ENCODE measurements at regions of chr14 and their contacts with region 1.

Region 1: DNA sequence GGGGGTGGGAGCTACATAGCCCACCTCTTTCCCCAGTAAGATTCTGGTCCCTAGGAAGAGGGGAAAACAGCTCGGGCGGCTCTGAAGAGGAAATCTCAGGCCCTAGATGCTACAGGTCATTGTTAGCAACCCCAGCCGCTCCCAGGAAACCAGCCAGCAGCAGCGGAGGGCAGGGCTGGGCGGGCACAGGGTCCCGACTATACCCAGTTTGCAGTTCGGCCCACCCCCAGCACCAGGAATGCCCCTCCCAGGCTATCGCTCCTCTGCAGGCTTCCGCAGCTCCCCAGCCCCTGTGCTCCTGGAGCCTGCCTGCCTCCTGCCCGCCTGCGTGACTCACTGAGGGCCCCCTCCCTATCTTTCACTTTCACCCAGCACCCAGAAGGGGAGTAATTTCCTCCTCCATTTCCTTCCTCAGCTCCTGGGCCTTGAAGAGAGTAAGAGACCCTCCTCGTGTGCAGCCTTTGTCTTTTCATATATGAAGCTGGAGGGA is 27.2 kb upstream of the PNMA1 start:
- DNase-seq: peak; percentile 83
- ATAC-seq: peak; percentile 73
- H3K4me3 Mint-ChIP-seq: peak overlapping the region; percentile 74
- H3K27ac Mint-ChIP-seq: peak overlapping the region; percentile 98
- H3K4me1 Mint-ChIP-seq: peaks cover 71% of the 10 kb centered on the region
- H3K27me3 Mint-ChIP-seq: no peaks in the 10 kb centered on the region
- CTCF ChIP-seq: no peak

Region 2: DNA sequence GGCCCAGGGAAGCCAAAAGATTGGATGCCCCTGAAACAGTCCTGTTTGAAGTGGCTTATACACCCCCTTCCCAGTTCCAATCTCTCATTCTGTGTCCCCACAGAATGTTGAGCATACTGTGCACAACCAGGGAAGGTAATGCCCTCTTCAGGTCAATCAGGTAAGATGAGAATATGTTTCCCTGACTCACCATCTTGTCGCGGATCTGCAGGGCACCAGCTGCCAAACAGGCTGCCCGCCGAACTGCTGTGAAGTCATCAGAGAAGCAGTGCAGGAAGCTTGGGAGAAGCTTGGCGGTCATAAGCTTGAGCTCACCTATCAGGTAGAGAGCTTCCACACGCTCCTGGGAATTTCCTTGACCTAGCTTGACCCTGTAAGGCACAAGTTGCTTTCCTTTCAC is 241.1 kb before region 1 on chr14:
- CTCF ChIA-PET with region 1: no interaction called
- POLR2A ChIA-PET with region 1: no interaction called
- intact Hi-C with region 1: no loop called
- DNase-seq: no peak
- ATAC-seq: no peak
- H3K4me3 Mint-ChIP-seq: no peak overlapping the region
- H3K27ac Mint-ChIP-seq: no peak overlapping the region
- H3K4me1 Mint-ChIP-seq: peaks cover 5% of the 10 kb centered on the region
- H3K27me3 Mint-ChIP-seq: no peaks in the 10 kb centered on the region
- CTCF ChIP-seq: no peak

Region 3: DNA sequence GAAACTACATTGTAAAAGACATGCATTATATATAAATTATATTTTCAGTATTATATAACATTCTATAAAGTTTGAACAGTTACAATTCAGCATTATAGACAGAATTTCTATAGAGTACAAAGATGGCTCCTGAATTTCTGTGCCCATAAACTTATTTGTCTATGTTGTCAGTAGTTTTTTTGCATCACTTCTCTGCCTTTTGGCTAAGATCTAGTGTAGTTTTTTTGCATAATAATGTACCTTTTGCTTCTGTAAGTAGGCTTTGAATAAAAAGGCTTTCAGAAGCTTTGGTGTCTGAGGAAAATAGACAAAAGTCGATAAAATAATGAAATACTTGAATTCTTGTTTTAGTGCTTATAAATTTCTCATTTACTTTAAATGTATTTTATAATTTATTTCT is 85.6 kb before region 1 on chr14:
- CTCF ChIA-PET with region 1: no interaction called
- POLR2A ChIA-PET with region 1: no interaction called
- intact Hi-C with region 1: no loop called
- DNase-seq: no peak
- ATAC-seq: no peak
- H3K4me3 Mint-ChIP-seq: no peak overlapping the region
- H3K27ac Mint-ChIP-seq: no peak overlapping the region
- H3K4me1 Mint-ChIP-seq: no peaks in the 10 kb centered on the region
- H3K27me3 Mint-ChIP-seq: no peaks in the 10 kb centered on the region
- CTCF ChIP-seq: no peak

Region 4: GRCh38 chr14:73771848-73772638 is 30.6 kb after region 1 on chr14:
- CTCF ChIA-PET with region 1: interaction called, 9 read pairs
- POLR2A ChIA-PET with region 1: interaction called, 22 read pairs
- intact Hi-C with region 1: no loop called
- DNase-seq: peak; percentile 96
- ATAC-seq: peak; percentile 81
- H3K4me3 Mint-ChIP-seq: peak overlapping the region; percentile 41
- H3K27ac Mint-ChIP-seq: peak overlapping the region; percentile 92
- H3K4me1 Mint-ChIP-seq: peaks cover 73% of the 10 kb centered on the region
- H3K27me3 Mint-ChIP-seq: no peaks in the 10 kb centered on the region
- CTCF ChIP-seq: no peak

Region 5: GRCh38 chr14:73825551-73826188 is 84.2 kb after region 1 on chr14:
- CTCF ChIA-PET with region 1: interaction called, 63 read pairs
- POLR2A ChIA-PET with region 1: interaction called, 4 read pairs
- intact Hi-C with region 1: loop called (anchors 5 kb)
- DNase-seq: peak; percentile 88
- ATAC-seq: peak; percentile 85
- H3K4me3 Mint-ChIP-seq: no peak overlapping the region
- H3K27ac Mint-ChIP-seq: no peak overlapping the region
- H3K4me1 Mint-ChIP-seq: peaks cover 19% of the 10 kb centered on the region
- H3K27me3 Mint-ChIP-seq: no peaks in the 10 kb centered on the region
- CTCF ChIP-seq: peak; percentile 89

Region 6: GRCh38 chr14:73851644-73852382 is 110.4 kb after region 1 on chr14 and contains the start of gene PTGR2:
- CTCF ChIA-PET with region 1: interaction called, 4 read pairs
- POLR2A ChIA-PET with region 1: interaction called, 10 read pairs
- intact Hi-C with region 1: no loop called
- DNase-seq: peak; percentile 94
- ATAC-seq: peak; percentile 98
- H3K4me3 Mint-ChIP-seq: peak within 1 kb of the TSS; percentile 87
- H3K27ac Mint-ChIP-seq: peak within 1 kb of the TSS; percentile 99
- H3K4me1 Mint-ChIP-seq: peaks cover 15% of the 10 kb centered on the region
- H3K27me3 Mint-ChIP-seq: no peaks in the 10 kb centered on the region
- CTCF ChIP-seq: no peak
- total RNA-seq, gene PTGR2: 10.6 to 11.0 TPM

Measured in activated CD8-positive, alpha-beta T cell treated with anti-CD3 and anti-CD28 coated beads for 36 hours (primary cell).